HEK293 (cell line): ENCODE measurements at regions of chr14 and their contacts with region 1.

Region 1: GRCh38 chr14:67532998-67533753 is at the start of gene PLEKHH1:
- H3K4me3 ChIP-seq: peak within 1 kb of the TSS; percentile 71
- H3K27ac ChIP-seq: peak within 1 kb of the TSS; percentile 94
- H3K4me1 ChIP-seq: no peaks in the 10 kb centered on the region
- CTCF ChIP-seq: no peak

Region 2: DNA sequence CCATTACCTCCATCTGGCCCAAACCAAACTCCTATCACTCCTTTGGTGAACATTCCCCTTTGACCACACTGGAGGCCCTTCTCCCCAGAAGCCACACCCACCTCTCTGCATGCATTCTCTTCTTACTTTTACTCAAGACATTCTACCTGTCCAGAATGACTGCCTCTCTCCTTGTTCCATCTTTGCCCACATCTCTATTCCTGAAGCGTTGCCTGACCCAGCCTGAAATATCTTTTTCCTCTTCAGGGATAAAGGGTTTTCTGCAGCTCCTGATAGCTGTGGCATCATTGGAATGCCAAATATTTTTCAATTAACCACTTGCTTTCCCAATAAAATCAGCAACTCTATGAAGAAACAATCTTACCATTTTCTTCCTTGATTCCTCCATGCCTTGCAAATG is 136.7 kb before region 1 on chr14:
- CTCF ChIA-PET with region 1: no interaction called
- POLR2A ChIA-PET with region 1: no interaction called
- H3K4me3 ChIP-seq: no peak overlapping the region
- H3K27ac ChIP-seq: no peak overlapping the region
- H3K4me1 ChIP-seq: no peaks in the 10 kb centered on the region
- CTCF ChIP-seq: no peak

Region 3: GRCh38 chr14:67479974-67480373 is 53.2 kb before region 1 on chr14:
- CTCF ChIA-PET with region 1: no interaction called
- POLR2A ChIA-PET with region 1: no interaction called
- H3K4me3 ChIP-seq: no peak overlapping the region
- H3K27ac ChIP-seq: no peak overlapping the region
- H3K4me1 ChIP-seq: no peaks in the 10 kb centered on the region
- CTCF ChIP-seq: no peak

Region 4: GRCh38 chr14:67695394-67695949 is 162.3 kb after region 1 on chr14 and contains the start of gene RDH11:
- CTCF ChIA-PET with region 1: no interaction called
- POLR2A ChIA-PET with region 1: interaction called, 13 read pairs
- H3K4me3 ChIP-seq: peak within 1 kb of the TSS; percentile 89
- H3K27ac ChIP-seq: peak within 1 kb of the TSS; percentile 64
- H3K4me1 ChIP-seq: peaks cover 5% of the 10 kb centered on the region; the same call in 1 of the 2 replicates
- CTCF ChIP-seq: no peak